B cell (primary cell): ENCODE measurements at regions of chr11 and their contacts with region 1.

Region 1: GRCh38 chr11:69048718-69049489 is at the start of gene TPCN2:
- DNase-seq: peak; percentile 97
- ATAC-seq: peak; percentile 98
- H3K4me3 ChIP-seq: peak within 1 kb of the TSS; percentile 34 to 99 (median 86)
- H3K4me3 Mint-ChIP-seq: peak within 1 kb of the TSS; percentile 85
- H3K27ac ChIP-seq: peak within 1 kb of the TSS; percentile 75 to 98
- H3K27ac Mint-ChIP-seq: peak within 1 kb of the TSS; percentile 82
- H3K4me1 ChIP-seq: peaks cover 17 to 54% of the 10 kb centered on the region in 2 donors
- H3K4me1 Mint-ChIP-seq: peaks cover 38% of the 10 kb centered on the region
- H3K27me3 ChIP-seq: no peaks in the 10 kb centered on the region
- H3K27me3 Mint-ChIP-seq: peaks cover 9% of the 10 kb centered on the region
- CTCF ChIP-seq: no peak
- total RNA-seq, gene TPCN2: 71.4 and 76.2 TPM in 2 replicates

Region 2: DNA sequence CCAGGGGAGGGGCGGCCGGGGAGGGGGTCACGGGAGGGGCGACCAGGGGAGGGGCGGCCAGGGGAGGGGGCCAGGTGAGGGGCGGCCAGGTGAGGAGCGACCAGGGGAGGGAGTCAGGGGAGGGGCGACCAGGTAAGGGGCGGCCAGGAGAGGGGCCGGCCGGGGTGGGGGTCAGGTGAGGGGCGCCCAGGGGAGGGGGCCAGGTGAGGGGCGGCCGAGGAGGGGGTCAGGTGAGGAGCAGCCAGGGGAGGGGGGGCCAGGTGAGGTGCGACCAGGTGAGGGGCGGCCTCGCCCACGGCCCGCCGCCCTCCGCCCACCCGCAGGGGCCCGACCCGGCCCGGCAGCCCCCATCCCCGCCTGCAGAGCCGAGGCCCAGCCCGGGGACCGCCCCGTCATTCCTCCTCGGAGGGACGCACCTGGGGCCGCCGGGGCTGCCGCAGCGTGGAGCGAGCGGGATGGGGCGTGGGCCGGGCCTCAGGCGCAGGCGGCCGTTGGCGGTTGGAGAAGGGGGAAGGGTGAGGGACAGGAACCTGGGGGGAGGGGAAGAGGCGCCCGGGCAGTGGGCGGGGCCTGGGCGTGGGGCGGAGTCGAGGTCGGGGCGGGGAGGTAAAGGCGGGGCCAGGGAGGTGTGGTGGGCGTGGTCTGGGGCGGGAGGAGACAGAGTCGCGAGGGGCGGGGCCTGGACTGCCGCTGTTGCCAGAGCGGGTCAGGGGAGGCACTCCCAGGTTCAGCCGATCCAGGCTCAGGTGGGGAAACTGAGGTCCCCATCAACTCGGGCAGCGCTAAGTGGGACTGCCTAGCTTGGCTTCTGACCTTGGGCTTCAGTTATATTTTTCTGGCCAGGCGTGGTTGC is 297.7 kb before region 1 on chr11 and contains the start of gene TESMIN:
- CTCF ChIA-PET with region 1: no interaction called
- POLR2A ChIA-PET with region 1: no interaction called
- intact Hi-C with region 1: loop called (anchors 2 kb)
- DNase-seq: peak; percentile 91
- ATAC-seq: peak; percentile 100
- H3K4me3 ChIP-seq: peak within 1 kb of the TSS in 3 of 5 experiments; percentile 53 to 68 (median 62)
- H3K4me3 Mint-ChIP-seq: peak within 1 kb of the TSS; percentile 83
- H3K27ac ChIP-seq: no peak within 1 kb of the TSS
- H3K27ac Mint-ChIP-seq: peak within 1 kb of the TSS; percentile 50
- H3K4me1 ChIP-seq: peaks cover 3 to 11% of the 10 kb centered on the region in 2 donors
- H3K4me1 Mint-ChIP-seq: peaks cover 12% of the 10 kb centered on the region
- H3K27me3 ChIP-seq: no peaks in the 10 kb centered on the region
- H3K27me3 Mint-ChIP-seq: no peaks in the 10 kb centered on the region
- CTCF ChIP-seq: no peak
- total RNA-seq, gene TESMIN: 4.3 and 4.6 TPM in 2 replicates

Region 3: DNA sequence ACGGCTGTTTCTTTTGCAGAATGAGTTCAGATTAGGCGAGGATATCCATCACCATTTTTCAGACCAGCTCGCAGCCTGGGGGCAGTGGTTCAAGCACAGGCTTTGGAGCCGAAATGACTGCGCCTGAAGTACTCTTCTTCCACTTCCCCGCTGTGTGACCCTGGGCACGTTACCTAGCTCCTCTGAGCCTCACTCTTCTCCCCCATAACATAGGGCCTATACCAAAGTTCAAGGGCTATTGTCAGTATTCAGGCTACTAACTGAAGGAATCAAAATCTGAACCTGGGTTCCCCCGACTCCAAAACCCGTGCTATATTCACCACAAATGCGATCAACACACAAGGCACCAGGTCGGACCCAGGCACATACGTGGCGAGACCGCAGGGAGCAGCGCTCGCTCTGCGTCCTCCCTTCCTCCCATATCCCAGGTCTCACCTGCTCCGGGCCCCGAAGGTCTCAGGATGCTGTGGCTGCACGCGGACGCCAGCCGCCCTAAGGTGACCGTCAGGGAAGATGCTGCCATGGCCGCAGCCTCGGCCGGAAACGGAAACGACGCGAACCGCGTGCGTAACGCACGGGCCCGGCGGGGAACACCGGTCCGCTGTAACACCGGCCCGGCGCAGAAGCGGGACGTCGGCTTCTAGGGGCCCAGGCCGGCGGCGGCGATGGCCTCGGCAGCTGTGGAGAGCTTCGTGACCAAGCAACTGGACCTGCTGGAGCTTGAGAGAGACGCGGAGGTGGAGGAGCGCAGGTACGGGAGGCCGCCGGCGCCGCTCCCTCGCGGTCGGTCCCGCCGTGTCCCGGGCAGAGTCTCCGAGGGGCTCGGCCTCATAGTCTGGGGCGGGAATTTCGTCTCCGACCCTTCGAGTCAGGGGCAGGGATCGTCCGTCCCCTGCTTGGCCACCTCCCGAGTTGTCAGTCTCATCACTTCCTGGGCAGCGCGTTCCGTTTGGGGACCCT is 145.3 kb before region 1 on chr11 and contains the starts of genes IGHMBP2 and MRPL21:
- CTCF ChIA-PET with region 1: no interaction called
- POLR2A ChIA-PET with region 1: no interaction called
- intact Hi-C with region 1: loop called (anchors 2 kb)
- DNase-seq: peak; percentile 90
- ATAC-seq: peak; percentile 95
- H3K4me3 ChIP-seq: peak within 1 kb of the TSS; percentile 79 to 99 (median 93)
- H3K4me3 Mint-ChIP-seq: peak within 1 kb of the TSS; percentile 97
- H3K27ac ChIP-seq: peak within 1 kb of the TSS; percentile 75 to 91
- H3K27ac Mint-ChIP-seq: peak within 1 kb of the TSS; percentile 88
- H3K4me1 ChIP-seq: peaks cover 14 to 21% of the 10 kb centered on the region in 2 donors
- H3K4me1 Mint-ChIP-seq: peaks cover 41% of the 10 kb centered on the region
- H3K27me3 ChIP-seq: no peaks in the 10 kb centered on the region
- H3K27me3 Mint-ChIP-seq: no peaks in the 10 kb centered on the region
- CTCF ChIP-seq: no peak
- total RNA-seq, gene IGHMBP2: 37.0 and 41.4 TPM in 2 replicates
- total RNA-seq, gene MRPL21: 34.4 and 35.8 TPM in 2 replicates

Region 4: DNA sequence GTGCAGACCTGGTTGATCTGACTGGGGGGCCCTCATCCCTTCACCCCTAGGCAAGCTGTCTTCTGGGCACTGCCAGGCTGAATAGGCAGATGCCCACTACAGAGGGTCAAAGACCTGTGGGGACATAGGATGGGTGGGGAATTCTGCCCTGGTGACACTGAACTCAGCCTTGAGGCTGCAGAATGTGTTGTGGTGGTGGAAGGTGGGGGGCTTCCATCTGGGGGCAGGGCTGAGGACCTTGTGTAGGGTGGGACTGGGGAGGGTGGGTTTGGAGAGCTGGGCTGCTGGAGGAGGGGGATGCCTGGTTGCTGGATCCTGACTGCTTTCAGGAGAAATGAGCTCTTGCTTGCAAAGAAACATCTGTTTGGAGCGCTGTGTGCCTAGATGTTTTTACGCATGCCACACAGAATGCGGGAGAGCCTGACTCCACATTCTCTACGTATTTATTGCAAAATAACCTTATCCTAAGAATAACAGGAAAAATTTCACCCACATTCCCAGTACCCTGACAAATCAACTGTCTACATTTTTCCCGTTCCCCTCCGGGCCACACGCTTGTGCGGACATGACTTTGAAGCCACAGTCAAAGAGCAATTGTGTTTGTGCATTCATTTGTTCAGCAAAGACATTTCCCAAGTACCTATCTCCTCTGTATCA is 125.1 kb after region 1 on chr11:
- CTCF ChIA-PET with region 1: no interaction called
- POLR2A ChIA-PET with region 1: no interaction called
- intact Hi-C with region 1: no loop called
- DNase-seq: no peak
- ATAC-seq: no peak
- H3K4me3 ChIP-seq: no peak overlapping the region
- H3K4me3 Mint-ChIP-seq: no peak overlapping the region
- H3K27ac ChIP-seq: no peak overlapping the region
- H3K27ac Mint-ChIP-seq: no peak overlapping the region
- H3K4me1 ChIP-seq: no peaks in the 10 kb centered on the region
- H3K4me1 Mint-ChIP-seq: no peaks in the 10 kb centered on the region
- H3K27me3 ChIP-seq: peaks cover 0 to 4% (median 0%) of the 10 kb centered on the region in 4 experiments
- H3K27me3 Mint-ChIP-seq: peaks cover under 1% of the 10 kb centered on the region
- CTCF ChIP-seq: no peak